ENCODE measurements at regions of chr16 and their contacts with region 1.

Region 1: GRCh38 chr16:85465968-85466700 is 147.0 kb upstream of the GSE1 start:
- DNase-seq: peak; percentile 70 to 91 (median 90)
- ATAC-seq: peak; percentile 60 to 61
- H3K4me3 ChIP-seq: no peak overlapping the region
- H3K27ac ChIP-seq: peak overlapping the region; percentile 87
- H3K4me1 ChIP-seq: peaks cover 20% of the 10 kb centered on the region
- H3K27me3 ChIP-seq: no peaks in the 10 kb centered on the region

Region 2: GRCh38 chr16:85393674-85394483 is 72.3 kb before region 1 on chr16:
- intact Hi-C with region 1: loop called in 1 of 4 experiments (anchors 5 kb)
- DNase-seq: peak; percentile 76 to 91 (median 88)
- ATAC-seq: peak; percentile 5 to 41
- H3K4me3 ChIP-seq: no peak overlapping the region
- H3K27ac ChIP-seq: no peak overlapping the region
- H3K4me1 ChIP-seq: peaks cover 12% of the 10 kb centered on the region
- H3K27me3 ChIP-seq: no peaks in the 10 kb centered on the region